Lower leg skin (tissue), 4 donors: ENCODE measurements at regions of chr16 and their contacts with region 1.

Region 1: DNA sequence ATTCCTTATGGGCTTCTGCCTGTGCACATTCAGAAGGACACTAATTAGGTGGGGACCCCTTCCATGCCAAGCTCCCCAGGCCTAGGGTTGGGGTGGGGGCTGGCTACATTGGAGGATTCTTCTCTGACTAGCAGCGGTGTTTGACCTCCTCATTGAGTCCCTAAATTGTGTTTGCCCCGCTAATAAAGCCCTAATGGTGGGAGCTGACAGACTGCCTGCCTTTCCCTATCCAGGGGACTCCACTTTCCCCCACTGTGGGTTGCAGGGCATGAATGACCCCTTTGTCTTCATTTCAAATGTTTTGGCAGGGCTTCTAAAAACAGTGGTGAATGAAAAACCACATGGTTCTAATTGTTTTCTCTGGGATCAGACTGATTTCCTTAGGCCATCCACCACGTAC is 476.8 kb upstream of the CDH11 start:
- DNase-seq: no peak
- H3K4me3 ChIP-seq: no peak overlapping the region
- CTCF ChIP-seq: no peak
- POLR2A ChIP-seq: no peak

Region 2: DNA sequence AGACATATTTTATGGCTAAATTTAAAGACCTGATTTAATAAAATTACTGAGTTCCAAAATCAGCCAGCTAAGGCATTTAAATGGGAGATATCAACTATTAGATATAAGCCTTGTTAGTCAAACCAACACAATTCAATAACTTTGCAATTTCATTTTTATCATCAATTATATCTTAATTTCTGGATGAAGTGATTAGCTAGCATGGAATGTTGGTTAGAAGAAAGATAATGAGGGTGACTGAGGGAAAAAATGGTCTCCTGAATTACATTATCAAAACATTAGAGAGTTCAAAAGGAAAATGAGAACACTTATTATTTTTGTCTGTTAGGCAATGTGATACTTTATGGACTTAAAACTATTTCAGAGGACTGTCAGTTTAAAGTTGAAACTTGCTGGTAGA is 1002.4 kb before region 1 on chr16:
- intact Hi-C with region 1: loop called (anchors 5 kb)
- DNase-seq: no peak
- H3K4me3 ChIP-seq: no peak overlapping the region
- CTCF ChIP-seq: no peak
- POLR2A ChIP-seq: no peak